Caco-2 (cell line): ENCODE measurements at regions of chr14 and their contacts with region 1.

Region 1: DNA sequence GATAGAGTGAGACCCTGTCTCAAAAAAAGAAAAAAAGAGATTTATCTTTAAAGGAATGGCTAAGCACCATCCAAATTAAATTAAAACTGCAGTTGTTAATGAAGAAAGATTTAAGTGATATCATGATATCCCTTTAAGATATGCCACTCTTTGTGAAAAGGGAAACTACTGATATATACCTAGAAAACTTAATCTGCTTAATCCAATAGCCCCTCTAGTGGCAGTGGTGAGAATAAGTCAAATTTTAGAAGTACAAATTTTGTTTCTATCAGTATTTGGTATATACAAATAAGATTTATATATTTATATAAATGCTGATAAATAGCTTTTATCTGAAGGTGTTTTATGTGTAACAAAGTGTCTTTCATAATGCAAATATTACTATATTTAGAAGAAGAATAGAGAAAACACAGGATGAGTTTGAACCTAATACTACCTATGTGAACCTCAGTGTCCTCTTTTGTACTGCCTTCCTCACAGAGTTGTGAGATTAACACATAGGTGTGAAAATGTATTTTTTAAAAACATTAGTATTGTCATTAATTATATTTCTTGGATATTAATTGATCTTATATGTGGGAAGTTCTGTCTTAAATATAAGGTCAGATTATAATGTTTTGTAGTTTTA is 51.4 kb upstream of the GARIN2 start:
- DNase-seq: no peak
- H3K4me3 ChIP-seq: no peak overlapping the region
- H3K4me3 Mint-ChIP-seq: no peak overlapping the region
- H3K27ac Mint-ChIP-seq: no peak overlapping the region
- H3K4me1 ChIP-seq: no peaks in the 10 kb centered on the region
- H3K4me1 Mint-ChIP-seq: no peaks in the 10 kb centered on the region
- H3K27me3 ChIP-seq: no peaks in the 10 kb centered on the region
- H3K27me3 Mint-ChIP-seq: no peaks in the 10 kb centered on the region
- CTCF ChIP-seq: peak; percentile 40 to 55

Region 2: DNA sequence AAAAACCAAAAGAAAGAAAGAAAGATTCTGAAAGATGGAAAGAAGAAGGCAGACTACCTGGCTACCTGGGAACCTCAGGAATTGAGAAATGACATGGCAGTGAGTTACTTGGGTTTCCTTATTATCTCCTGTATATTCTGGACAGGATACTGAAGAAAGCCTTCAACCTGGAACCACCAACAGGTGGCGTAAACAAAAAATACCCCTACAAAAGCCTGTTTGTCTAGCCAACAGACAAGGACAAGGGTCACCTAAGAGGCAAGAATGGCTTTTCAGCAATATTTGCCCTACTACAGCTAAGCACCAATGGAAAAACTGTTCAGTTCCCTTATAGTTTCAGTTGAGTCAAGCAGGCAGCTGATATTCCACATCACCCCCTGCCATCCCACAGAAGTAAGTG is 355.0 kb before region 1 on chr14:
- CTCF ChIA-PET with region 1: no interaction called
- POLR2A ChIA-PET with region 1: no interaction called
- intact Hi-C with region 1: loop called (anchors 2 kb)
- DNase-seq: peak in 1 of 2 experiments; percentile 21
- H3K4me3 ChIP-seq: no peak overlapping the region
- H3K4me3 Mint-ChIP-seq: no peak overlapping the region
- H3K27ac Mint-ChIP-seq: no peak overlapping the region
- H3K4me1 ChIP-seq: no peaks in the 10 kb centered on the region; the same call in 1 of the 2 replicates
- H3K4me1 Mint-ChIP-seq: no peaks in the 10 kb centered on the region
- H3K27me3 ChIP-seq: no peaks in the 10 kb centered on the region
- H3K27me3 Mint-ChIP-seq: no peaks in the 10 kb centered on the region
- CTCF ChIP-seq: no peak

Region 3: DNA sequence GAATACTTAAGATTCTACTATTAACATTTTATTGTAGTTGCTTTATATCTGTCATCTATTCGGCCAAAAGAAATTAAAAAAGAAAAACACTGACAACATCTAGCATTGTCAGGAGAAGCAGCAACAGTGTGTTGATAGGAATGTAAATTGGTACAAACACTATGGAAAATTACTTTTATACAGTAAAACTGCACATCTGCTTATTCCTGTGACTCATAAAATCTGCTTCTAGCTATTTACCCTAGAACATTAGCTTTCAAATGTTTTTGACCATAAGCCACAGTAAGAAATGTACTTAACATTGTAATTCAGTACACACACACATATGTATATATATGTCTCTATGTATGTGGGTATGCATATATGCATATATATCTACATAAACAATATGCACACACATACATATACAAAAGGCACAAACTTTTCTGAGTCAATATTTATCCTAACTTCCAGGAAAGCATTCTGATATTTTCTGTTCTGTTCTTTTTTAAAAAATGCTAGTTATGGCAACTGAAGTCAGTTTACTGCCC is 227.5 kb before region 1 on chr14:
- CTCF ChIA-PET with region 1: no interaction called
- POLR2A ChIA-PET with region 1: no interaction called
- intact Hi-C with region 1: loop called (anchors 10 kb)
- DNase-seq: no peak
- H3K4me3 ChIP-seq: no peak overlapping the region
- H3K4me3 Mint-ChIP-seq: no peak overlapping the region
- H3K27ac Mint-ChIP-seq: no peak overlapping the region
- H3K4me1 ChIP-seq: no peaks in the 10 kb centered on the region
- H3K4me1 Mint-ChIP-seq: no peaks in the 10 kb centered on the region
- H3K27me3 ChIP-seq: no peaks in the 10 kb centered on the region
- H3K27me3 Mint-ChIP-seq: no peaks in the 10 kb centered on the region
- CTCF ChIP-seq: no peak

Region 4: GRCh38 chr14:66965831-66966230 is 172.0 kb before region 1 on chr14:
- CTCF ChIA-PET with region 1: no interaction called
- POLR2A ChIA-PET with region 1: no interaction called
- intact Hi-C with region 1: no loop called
- DNase-seq: no peak
- H3K4me3 ChIP-seq: no peak overlapping the region
- H3K4me3 Mint-ChIP-seq: no peak overlapping the region
- H3K27ac Mint-ChIP-seq: no peak overlapping the region
- H3K4me1 ChIP-seq: no peaks in the 10 kb centered on the region
- H3K4me1 Mint-ChIP-seq: no peaks in the 10 kb centered on the region
- H3K27me3 ChIP-seq: no peaks in the 10 kb centered on the region
- H3K27me3 Mint-ChIP-seq: no peaks in the 10 kb centered on the region
- CTCF ChIP-seq: no peak

Region 5: DNA sequence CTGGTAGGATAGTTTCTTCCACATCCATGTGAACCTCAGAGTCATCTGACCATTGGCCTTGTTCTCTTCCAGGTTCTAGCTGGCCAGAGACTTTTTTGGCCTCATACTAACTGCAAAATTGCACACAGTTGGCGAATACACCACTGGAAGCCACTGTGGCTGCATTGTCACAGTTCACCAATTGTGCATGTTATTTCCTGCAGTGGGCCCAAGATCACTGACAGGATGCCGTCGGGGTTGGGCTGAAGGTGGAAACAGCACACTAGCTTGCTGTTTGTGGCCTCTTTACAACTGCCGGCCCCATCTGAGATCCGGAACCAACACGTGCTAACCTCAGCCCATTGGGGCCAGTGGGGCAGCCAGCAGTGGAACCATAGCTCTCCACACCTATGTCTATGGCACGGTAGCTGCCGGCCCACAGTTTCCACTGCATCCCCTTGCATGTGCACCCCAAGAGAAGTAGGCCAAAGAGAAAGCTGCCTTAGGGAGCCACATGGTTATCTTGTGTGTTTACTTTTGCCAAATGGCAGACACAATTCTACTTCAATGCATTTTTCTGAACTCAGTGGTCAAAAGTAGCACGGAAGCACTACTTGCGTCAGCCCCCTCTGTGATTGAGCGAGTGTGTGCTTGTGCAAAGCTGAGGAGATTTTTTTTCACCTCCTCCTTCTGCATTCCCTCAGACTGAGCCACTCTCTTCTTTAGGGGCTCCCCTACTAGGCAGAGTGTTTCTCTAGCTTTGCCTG is 1145.7 kb after region 1 on chr14:
- CTCF ChIA-PET with region 1: no interaction called
- POLR2A ChIA-PET with region 1: no interaction called
- intact Hi-C with region 1: no loop called
- DNase-seq: no peak
- H3K4me3 ChIP-seq: no peak overlapping the region
- H3K4me3 Mint-ChIP-seq: no peak overlapping the region
- H3K27ac Mint-ChIP-seq: no peak overlapping the region
- H3K4me1 ChIP-seq: peaks cover 10% of the 10 kb centered on the region; the same call in 1 of the 2 replicates
- H3K4me1 Mint-ChIP-seq: peaks cover 6% of the 10 kb centered on the region
- H3K27me3 ChIP-seq: no peaks in the 10 kb centered on the region
- H3K27me3 Mint-ChIP-seq: no peaks in the 10 kb centered on the region
- CTCF ChIP-seq: no peak